Right ventricle myocardium inferior (tissue), 1 donor: ENCODE measurements at regions of chr12 and their contacts with region 1.

Region 1: DNA sequence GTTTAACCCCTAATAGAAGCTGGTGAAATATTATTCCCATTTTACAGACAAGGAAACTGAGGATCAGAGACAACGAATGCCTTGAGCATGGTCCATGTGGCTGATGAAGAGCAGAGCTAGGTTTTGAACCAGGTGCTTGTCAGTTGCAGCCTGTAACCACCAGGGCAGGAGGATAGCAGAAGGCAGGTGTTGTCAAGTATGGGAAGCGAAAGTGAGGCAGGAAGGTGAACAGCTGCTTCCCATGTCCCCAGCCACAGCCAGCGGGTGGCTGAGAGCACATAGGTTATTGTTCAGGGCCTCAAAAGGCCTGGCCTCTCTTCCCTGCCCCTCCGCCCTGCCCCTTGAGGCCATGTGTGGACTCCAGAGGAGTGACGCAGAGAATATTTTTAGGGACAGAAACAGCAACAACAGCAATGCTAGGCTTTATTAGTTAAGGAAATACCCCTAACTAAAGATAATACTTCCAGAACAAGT is 39.6 kb downstream of the IQSEC3 start:
- DNase-seq: no peak
- ATAC-seq: no peak

Region 2: GRCh38 chr12:176321-177181 is 70.4 kb after region 1 on chr12:
- intact Hi-C with region 1: no loop called
- DNase-seq: peak; percentile 60
- ATAC-seq: peak; percentile 32

Region 3: GRCh38 chr12:188910-189621 is 82.9 kb after region 1 on chr12:
- intact Hi-C with region 1: loop called (anchors 5 kb)
- DNase-seq: peak; percentile 78
- ATAC-seq: peak; percentile 86

Region 4: GRCh38 chr12:497501-498160 is 391.5 kb after region 1 on chr12:
- intact Hi-C with region 1: no loop called
- DNase-seq: no peak
- ATAC-seq: no peak